Aorta (tissue), 5 donors: ENCODE measurements at regions of chr1 and their contacts with region 1.

Region 1: DNA sequence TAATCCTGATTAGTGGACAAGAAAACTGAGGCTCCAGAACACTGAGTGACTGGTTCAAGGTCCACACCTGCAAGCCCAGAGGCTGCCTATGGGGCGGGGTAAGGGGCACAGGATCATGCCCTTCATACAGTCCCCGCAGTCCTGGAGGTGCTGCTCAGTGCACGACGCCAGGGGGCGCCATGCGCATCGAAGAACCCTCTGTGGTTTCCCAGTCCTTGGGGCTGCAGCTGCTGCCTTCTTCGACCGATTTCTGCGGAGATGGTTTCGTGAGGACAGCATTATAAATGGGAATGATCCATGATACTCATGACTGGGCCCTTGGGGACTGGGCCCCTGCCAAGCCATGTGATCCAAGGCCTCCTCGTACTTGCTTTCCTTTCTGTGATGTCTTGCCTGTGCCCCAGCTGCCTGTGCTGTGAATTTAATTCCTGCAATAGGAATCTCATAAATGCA is 37.1 kb upstream of the ARHGEF10L start:
- DNase-seq: peak; percentile 92 to 97
- ATAC-seq: peak; percentile 96
- H3K4me3 ChIP-seq: no peak overlapping the region
- H3K27ac ChIP-seq: peak overlapping the region in 1 of 2 donors; percentile 41
- H3K4me1 ChIP-seq: peaks cover 0 to 2% of the 10 kb centered on the region in 2 donors
- H3K27me3 ChIP-seq: no peaks in the 10 kb centered on the region

Region 2: GRCh38 chr1:17527036-17527914 is 24.9 kb after region 1 on chr1:
- intact Hi-C with region 1: loop called (anchors 1 to 2 kb)
- DNase-seq: no peak
- ATAC-seq: peak; percentile 27
- H3K4me3 ChIP-seq: no peak overlapping the region
- H3K27ac ChIP-seq: peak overlapping the region in 1 of 2 donors; percentile 73
- H3K4me1 ChIP-seq: no peaks in the 10 kb centered on the region
- H3K27me3 ChIP-seq: no peaks in the 10 kb centered on the region

Region 3: GRCh38 chr1:17606826-17607440 is 104.6 kb after region 1 on chr1:
- intact Hi-C with region 1: loop called (anchors 1 to 2 kb)
- DNase-seq: peak; percentile 83 to 92
- ATAC-seq: peak; percentile 61
- H3K4me3 ChIP-seq: no peak overlapping the region
- H3K27ac ChIP-seq: peak overlapping the region in 1 of 2 donors; percentile 55
- H3K4me1 ChIP-seq: no peaks in the 10 kb centered on the region
- H3K27me3 ChIP-seq: no peaks in the 10 kb centered on the region